CD4-positive, alpha-beta memory T cell (primary cell): ENCODE measurements at regions of chr3 and their contacts with region 1.

Region 1: GRCh38 chr3:18758047-18758704 is 333.0 kb upstream of the SATB1 start:
- DNase-seq: peak; percentile 51 to 82 (median 77)
- H3K4me3 ChIP-seq: no peak overlapping the region
- H3K4me3 Mint-ChIP-seq: peak overlapping the region in 1 of 8 donors; percentile 13
- H3K27ac ChIP-seq: no peak overlapping the region
- H3K27ac Mint-ChIP-seq: peak overlapping the region in 6 of 7 donors; percentile 7 to 77 (median 34)
- H3K4me1 ChIP-seq: peaks cover 18% of the 10 kb centered on the region
- H3K4me1 Mint-ChIP-seq: peaks cover 21 to 24% (median 23%) of the 10 kb centered on the region in 4 donors
- H3K27me3 ChIP-seq: no peaks in the 10 kb centered on the region
- H3K27me3 Mint-ChIP-seq: no peaks in the 10 kb centered on the region

Region 2: DNA sequence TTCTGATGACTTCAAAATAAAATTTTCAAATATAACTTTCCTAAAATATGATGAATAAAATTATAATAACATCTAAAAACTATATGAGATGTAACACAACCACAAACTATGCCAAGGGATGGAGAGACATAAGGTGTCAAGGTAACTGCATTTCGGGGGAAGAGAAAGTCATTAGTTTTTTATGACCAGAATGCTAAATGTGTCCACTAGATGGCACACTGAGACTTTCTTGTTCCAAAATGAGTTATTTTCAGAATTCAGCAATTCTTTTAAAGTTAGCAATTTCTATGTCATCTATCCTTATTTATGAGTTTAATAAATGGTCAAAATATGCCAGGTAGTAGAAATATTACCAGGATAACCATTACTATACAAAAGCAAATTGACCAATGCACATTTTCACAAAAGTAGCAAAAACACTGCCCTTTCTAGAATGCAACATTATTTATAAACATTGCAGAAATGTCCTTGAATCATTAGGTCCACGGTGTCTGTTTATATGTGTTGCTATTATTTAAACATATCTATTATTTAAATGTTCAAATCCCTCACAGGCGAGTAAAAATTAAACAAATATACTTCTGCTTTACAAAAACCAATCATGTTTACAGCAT is 1499.2 kb before region 1 on chr3:
- CTCF ChIA-PET with region 1: no interaction called
- POLR2A ChIA-PET with region 1: no interaction called
- intact Hi-C with region 1: loop called (anchors 2 kb)
- DNase-seq: peak in 4 of 5 donors; percentile 31 to 45 (median 39)
- H3K4me3 ChIP-seq: no peak overlapping the region
- H3K4me3 Mint-ChIP-seq: no peak overlapping the region
- H3K27ac ChIP-seq: no peak overlapping the region
- H3K27ac Mint-ChIP-seq: no peak overlapping the region
- H3K4me1 ChIP-seq: no peaks in the 10 kb centered on the region
- H3K4me1 Mint-ChIP-seq: peaks cover 0 to 1% (median 0%) of the 10 kb centered on the region in 4 donors
- H3K27me3 ChIP-seq: no peaks in the 10 kb centered on the region
- H3K27me3 Mint-ChIP-seq: no peaks in the 10 kb centered on the region

Region 3: GRCh38 chr3:17882981-17883380 is 875.2 kb before region 1 on chr3:
- CTCF ChIA-PET with region 1: no interaction called
- POLR2A ChIA-PET with region 1: no interaction called
- intact Hi-C with region 1: no loop called
- DNase-seq: no peak
- H3K4me3 ChIP-seq: no peak overlapping the region
- H3K4me3 Mint-ChIP-seq: no peak overlapping the region
- H3K27ac ChIP-seq: no peak overlapping the region
- H3K27ac Mint-ChIP-seq: no peak overlapping the region
- H3K4me1 ChIP-seq: no peaks in the 10 kb centered on the region
- H3K4me1 Mint-ChIP-seq: no peaks in the 10 kb centered on the region
- H3K27me3 ChIP-seq: no peaks in the 10 kb centered on the region
- H3K27me3 Mint-ChIP-seq: peaks cover under 1 to 2% of the 10 kb centered on the region in 2 donors

Region 4: DNA sequence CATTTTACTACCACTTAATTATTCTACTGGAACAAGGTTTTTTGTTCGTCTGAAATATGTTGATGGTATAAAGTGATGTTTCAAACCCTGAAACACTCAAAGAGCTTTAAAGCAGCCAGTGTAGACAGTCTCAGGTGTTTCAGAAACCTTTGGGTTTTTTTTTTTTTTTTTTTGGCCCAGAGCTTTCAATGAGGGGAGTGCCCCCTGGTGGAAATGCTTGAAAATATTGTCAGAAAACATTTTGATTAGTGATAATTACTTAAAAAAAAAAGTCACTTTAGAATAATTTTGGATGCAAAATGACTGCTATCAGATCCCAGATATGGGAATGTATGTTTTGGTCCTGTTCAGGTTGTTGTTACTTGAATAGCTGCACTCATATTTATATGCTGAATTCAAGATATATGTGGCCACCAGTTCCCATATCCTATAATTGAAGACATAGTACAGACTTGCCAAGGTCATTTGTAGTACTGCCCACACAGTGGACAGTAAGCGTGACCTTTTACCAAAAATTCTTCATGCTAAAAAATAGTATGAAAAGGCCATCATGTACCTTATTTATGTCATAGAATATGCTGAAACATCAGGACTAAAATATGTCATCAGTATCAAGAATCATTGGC is 369.0 kb before region 1 on chr3:
- CTCF ChIA-PET with region 1: interaction called, 3 read pairs
- POLR2A ChIA-PET with region 1: interaction called, 4 read pairs
- intact Hi-C with region 1: loop called (anchors 1 kb)
- DNase-seq: peak in 4 of 5 donors; percentile 29 to 45 (median 36)
- H3K4me3 ChIP-seq: no peak overlapping the region
- H3K4me3 Mint-ChIP-seq: peak overlapping the region in 1 of 8 donors; percentile 43
- H3K27ac ChIP-seq: no peak overlapping the region
- H3K27ac Mint-ChIP-seq: peak overlapping the region in 2 of 7 donors; percentile 22 to 69
- H3K4me1 ChIP-seq: peaks cover 29% of the 10 kb centered on the region
- H3K4me1 Mint-ChIP-seq: peaks cover 15 to 53% (median 27%) of the 10 kb centered on the region in 4 donors
- H3K27me3 ChIP-seq: no peaks in the 10 kb centered on the region
- H3K27me3 Mint-ChIP-seq: no peaks in the 10 kb centered on the region

Region 5: DNA sequence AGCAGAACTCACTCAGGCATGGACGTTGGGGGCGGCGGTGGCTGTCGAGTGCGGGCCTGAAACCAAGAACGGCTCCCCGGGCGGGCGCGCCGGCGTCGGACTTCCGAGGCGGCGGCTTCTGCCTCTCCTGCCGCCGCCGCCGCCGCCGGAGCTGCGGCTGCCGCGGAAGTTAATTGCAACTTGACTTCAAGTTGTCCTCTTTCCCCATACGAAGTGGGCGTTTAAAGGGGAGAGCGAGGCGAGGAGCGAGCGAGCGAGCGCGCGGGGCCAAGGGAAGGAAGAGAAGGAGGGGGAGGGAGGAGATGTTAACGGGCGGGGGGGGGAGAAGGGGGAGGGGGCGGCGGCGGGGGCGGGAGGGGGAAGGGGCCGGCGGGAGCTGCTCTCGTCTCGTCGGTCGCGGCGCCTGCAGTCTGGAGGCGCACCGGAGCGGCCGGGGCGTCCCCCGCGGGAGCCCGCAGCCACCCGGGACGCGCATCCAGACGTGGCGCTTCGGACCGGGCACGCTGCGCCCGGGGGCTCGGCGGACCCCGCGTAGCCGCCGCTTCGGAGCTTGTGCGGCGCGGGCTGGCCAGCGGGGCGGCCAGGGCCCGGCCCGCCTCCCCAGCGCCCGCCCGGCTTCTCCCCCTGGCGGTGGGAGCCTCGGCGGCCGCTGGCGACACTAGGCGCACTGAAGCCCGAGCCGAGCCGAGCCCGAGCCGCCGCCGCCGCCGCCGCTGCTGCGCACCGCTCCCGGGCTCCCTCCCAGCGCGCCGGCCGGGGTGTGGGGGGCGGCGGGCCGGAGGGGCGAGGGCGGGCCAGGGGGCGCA is 313.4 kb before region 1 on chr3:
- CTCF ChIA-PET with region 1: interaction called, 4 read pairs
- POLR2A ChIA-PET with region 1: interaction called, 11 read pairs
- intact Hi-C with region 1: loop called (anchors 1 kb)
- DNase-seq: peak; percentile 79 to 88 (median 82)
- H3K4me3 ChIP-seq: peak overlapping the region; percentile 82 to 91
- H3K4me3 Mint-ChIP-seq: peak overlapping the region; percentile 93 to 98 (median 95)
- H3K27ac ChIP-seq: peak overlapping the region; percentile 83
- H3K27ac Mint-ChIP-seq: peak overlapping the region; percentile 79 to 96 (median 92)
- H3K4me1 ChIP-seq: peaks cover 47% of the 10 kb centered on the region
- H3K4me1 Mint-ChIP-seq: peaks cover 24 to 65% (median 43%) of the 10 kb centered on the region in 4 donors
- H3K27me3 ChIP-seq: no peaks in the 10 kb centered on the region
- H3K27me3 Mint-ChIP-seq: no peaks in the 10 kb centered on the region

Region 6: DNA sequence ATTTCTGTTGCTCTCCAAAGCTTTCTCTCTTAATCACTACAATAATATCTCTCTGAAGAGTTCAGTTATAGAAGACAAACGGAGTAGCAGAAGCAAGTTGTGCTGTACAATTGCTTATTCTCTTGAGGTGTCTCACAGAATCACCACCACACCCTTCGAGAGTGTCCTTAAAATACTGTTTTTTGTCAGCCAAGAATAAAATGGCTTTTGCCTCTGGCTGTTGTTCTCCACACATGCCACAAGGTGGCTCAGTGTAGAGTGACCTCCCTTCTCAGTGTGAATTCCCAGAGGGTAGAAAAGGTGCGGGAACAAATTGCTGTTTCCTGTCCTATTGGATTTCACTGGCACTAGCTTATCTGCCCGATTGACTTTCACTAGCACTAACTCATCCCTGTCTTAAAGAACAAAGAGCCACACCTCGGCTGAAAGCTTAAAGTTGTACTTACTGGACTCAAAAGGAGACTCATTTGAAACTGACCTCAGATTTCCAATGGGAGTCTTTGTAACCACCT is 198.8 kb before region 1 on chr3:
- CTCF ChIA-PET with region 1: interaction called, 184 read pairs
- POLR2A ChIA-PET with region 1: interaction called, 24 read pairs
- intact Hi-C with region 1: loop called (anchors 1 kb)
- DNase-seq: peak in 4 of 5 donors; percentile 38 to 52 (median 48)
- H3K4me3 ChIP-seq: no peak overlapping the region
- H3K4me3 Mint-ChIP-seq: peak overlapping the region in 6 of 8 donors; percentile 50 to 73 (median 58)
- H3K27ac ChIP-seq: no peak overlapping the region
- H3K27ac Mint-ChIP-seq: peak overlapping the region in 6 of 7 donors; percentile 55 to 85 (median 77)
- H3K4me1 ChIP-seq: peaks cover 43% of the 10 kb centered on the region
- H3K4me1 Mint-ChIP-seq: peaks cover 22 to 61% (median 41%) of the 10 kb centered on the region in 4 donors
- H3K27me3 ChIP-seq: no peaks in the 10 kb centered on the region
- H3K27me3 Mint-ChIP-seq: no peaks in the 10 kb centered on the region

Region 7: DNA sequence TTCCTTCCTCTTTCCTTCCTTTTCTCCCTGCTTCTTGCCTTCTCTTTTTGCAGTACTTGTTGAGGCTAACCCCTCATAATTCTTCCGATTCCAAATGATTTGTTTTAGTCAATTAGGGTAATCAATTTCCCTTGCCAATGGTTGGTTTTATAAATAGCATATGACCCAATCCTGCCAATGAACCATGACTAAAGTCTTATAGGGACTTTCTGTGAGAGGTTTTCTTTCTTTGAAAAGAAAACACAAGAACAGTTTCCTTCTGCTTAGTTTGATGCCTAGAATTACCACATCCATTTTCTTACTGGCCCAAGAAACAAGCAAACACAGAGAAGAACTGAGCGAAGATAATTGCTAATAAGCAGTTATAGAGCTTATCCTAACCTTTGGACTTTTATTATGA is 40.6 kb before region 1 on chr3:
- CTCF ChIA-PET with region 1: interaction called, 21 read pairs
- POLR2A ChIA-PET with region 1: interaction called, 5 read pairs
- intact Hi-C with region 1: no loop called
- DNase-seq: no peak
- H3K4me3 ChIP-seq: no peak overlapping the region
- H3K4me3 Mint-ChIP-seq: peak overlapping the region in 6 of 8 donors; percentile 14 to 66 (median 51)
- H3K27ac ChIP-seq: no peak overlapping the region
- H3K27ac Mint-ChIP-seq: peak overlapping the region; percentile 33 to 85 (median 61)
- H3K4me1 ChIP-seq: peaks cover 58% of the 10 kb centered on the region
- H3K4me1 Mint-ChIP-seq: peaks cover 50 to 68% (median 62%) of the 10 kb centered on the region in 4 donors
- H3K27me3 ChIP-seq: no peaks in the 10 kb centered on the region
- H3K27me3 Mint-ChIP-seq: no peaks in the 10 kb centered on the region

Region 8: GRCh38 chr3:18740631-18741583 is 17.3 kb before region 1 on chr3:
- CTCF ChIA-PET with region 1: interaction called, 8 read pairs
- POLR2A ChIA-PET with region 1: interaction called, 4 read pairs
- intact Hi-C with region 1: loop called (anchors 1 kb)
- DNase-seq: peak; percentile 78 to 87 (median 82)
- H3K4me3 ChIP-seq: peak overlapping the region in 1 of 2 donors; percentile 35
- H3K4me3 Mint-ChIP-seq: peak overlapping the region; percentile 69 to 87 (median 81)
- H3K27ac ChIP-seq: peak overlapping the region; percentile 60
- H3K27ac Mint-ChIP-seq: peak overlapping the region; percentile 88 to 97 (median 95)
- H3K4me1 ChIP-seq: peaks cover 79% of the 10 kb centered on the region
- H3K4me1 Mint-ChIP-seq: peaks cover 67 to 77% (median 72%) of the 10 kb centered on the region in 4 donors
- H3K27me3 ChIP-seq: no peaks in the 10 kb centered on the region
- H3K27me3 Mint-ChIP-seq: no peaks in the 10 kb centered on the region

Region 9: GRCh38 chr3:18891641-18892040 is 133.5 kb after region 1 on chr3:
- CTCF ChIA-PET with region 1: no interaction called
- POLR2A ChIA-PET with region 1: no interaction called
- intact Hi-C with region 1: no loop called
- DNase-seq: peak; percentile 13 to 48 (median 17)
- H3K4me3 ChIP-seq: no peak overlapping the region
- H3K4me3 Mint-ChIP-seq: no peak overlapping the region
- H3K27ac ChIP-seq: no peak overlapping the region
- H3K27ac Mint-ChIP-seq: no peak overlapping the region
- H3K4me1 ChIP-seq: no peaks in the 10 kb centered on the region
- H3K4me1 Mint-ChIP-seq: peaks cover 4 to 12% (median 7%) of the 10 kb centered on the region in 4 donors
- H3K27me3 ChIP-seq: no peaks in the 10 kb centered on the region
- H3K27me3 Mint-ChIP-seq: peaks cover 22% of the 10 kb centered on the region in 2 donors